ENCODE measurements at regions of chr12 and their contacts with region 1.

Region 1: DNA sequence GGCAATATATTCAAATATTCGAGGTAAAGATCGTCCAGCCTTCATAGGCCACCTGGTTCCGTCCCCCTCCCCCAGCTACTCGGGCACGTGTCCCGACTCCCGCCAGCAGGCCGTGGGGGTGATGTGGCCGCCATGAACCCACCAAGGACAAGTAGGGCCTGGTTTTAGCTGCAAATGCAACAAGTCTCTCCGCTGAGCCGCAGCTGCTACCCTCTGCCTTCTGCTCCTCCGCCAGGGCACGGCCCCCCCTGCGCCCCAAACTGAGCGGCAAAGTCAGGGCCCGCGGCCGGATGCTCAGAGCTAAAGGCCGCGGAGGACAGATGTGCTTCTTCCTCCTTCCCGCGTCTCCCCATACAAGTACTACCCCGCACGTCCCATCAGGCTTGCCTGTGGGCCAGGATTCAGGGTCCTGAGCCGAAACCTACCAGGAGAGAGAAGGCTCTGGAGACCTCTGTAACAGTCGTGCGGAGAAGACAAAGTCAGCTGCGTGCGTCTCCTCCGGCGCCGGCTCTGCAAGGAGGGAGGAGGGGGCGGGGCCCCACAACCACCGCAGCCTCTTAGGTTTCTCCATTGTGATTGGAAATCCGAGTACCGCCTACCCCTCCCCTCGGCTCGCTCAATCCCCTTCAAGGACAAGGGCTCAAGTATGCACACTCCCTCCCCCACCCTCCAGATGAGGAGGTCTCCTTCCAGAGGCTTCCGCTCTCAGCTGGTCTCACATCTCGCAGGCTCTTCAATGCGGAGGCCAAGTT is at the start of gene LDHB:
- DNase-seq: peak; percentile 83 to 96 (median 91)
- ATAC-seq: peak; percentile 92
- H3K4me3 ChIP-seq: peak within 1 kb of the TSS; percentile 87
- H3K4me3 Mint-ChIP-seq: peak within 1 kb of the TSS; percentile 99
- H3K27ac ChIP-seq: peak within 1 kb of the TSS; percentile 56 to 80
- H3K27ac Mint-ChIP-seq: peak within 1 kb of the TSS; percentile 91
- H3K4me1 ChIP-seq: peaks cover 16% of the 10 kb centered on the region
- H3K4me1 Mint-ChIP-seq: peaks cover 77% of the 10 kb centered on the region
- H3K27me3 ChIP-seq: no peaks in the 10 kb centered on the region
- H3K27me3 Mint-ChIP-seq: no peaks in the 10 kb centered on the region
- CTCF ChIP-seq: no peak
- total RNA-seq, gene LDHB: 559 to 605 TPM

Region 2: DNA sequence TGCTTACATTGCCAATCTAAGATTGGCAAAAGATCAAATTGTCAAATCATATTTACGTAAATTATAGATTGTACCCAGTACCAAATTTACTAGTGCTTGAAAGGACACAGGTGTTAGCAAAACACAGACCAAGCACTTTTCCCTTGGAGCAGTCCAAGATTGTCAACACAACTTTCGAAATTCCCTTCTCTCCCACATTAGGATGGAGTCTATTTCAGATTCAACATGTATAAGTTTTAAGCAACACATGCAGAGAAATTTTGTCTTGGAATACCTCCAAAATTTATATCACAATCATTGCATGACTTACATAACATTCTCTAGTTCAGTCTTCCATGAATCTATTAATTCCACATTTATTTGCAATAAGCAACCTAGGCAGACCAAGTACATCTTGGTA is 1037.2 kb before region 1 on chr12:
- CTCF ChIA-PET with region 1: no interaction called
- POLR2A ChIA-PET with region 1: no interaction called
- intact Hi-C with region 1: no loop called
- DNase-seq: no peak
- ATAC-seq: no peak
- H3K4me3 ChIP-seq: no peak overlapping the region
- H3K4me3 Mint-ChIP-seq: no peak overlapping the region
- H3K27ac ChIP-seq: no peak overlapping the region
- H3K27ac Mint-ChIP-seq: no peak overlapping the region
- H3K4me1 ChIP-seq: no peaks in the 10 kb centered on the region
- H3K4me1 Mint-ChIP-seq: no peaks in the 10 kb centered on the region
- H3K27me3 ChIP-seq: no peaks in the 10 kb centered on the region
- H3K27me3 Mint-ChIP-seq: no peaks in the 10 kb centered on the region
- CTCF ChIP-seq: no peak

Region 3: GRCh38 chr12:21438643-21439042 is 218.9 kb before region 1 on chr12:
- CTCF ChIA-PET with region 1: interaction called, 3 read pairs
- POLR2A ChIA-PET with region 1: interaction called, 14 read pairs
- intact Hi-C with region 1: no loop called
- DNase-seq: peak in 1 of 14 experiments; percentile 16
- ATAC-seq: no peak
- H3K4me3 ChIP-seq: peak overlapping the region; percentile 89
- H3K4me3 Mint-ChIP-seq: peak overlapping the region; percentile 99
- H3K27ac ChIP-seq: peak overlapping the region in 1 of 2 donors; percentile 12
- H3K27ac Mint-ChIP-seq: peak overlapping the region; percentile 97
- H3K4me1 ChIP-seq: peaks cover 19% of the 10 kb centered on the region
- H3K4me1 Mint-ChIP-seq: peaks cover 55% of the 10 kb centered on the region
- H3K27me3 ChIP-seq: no peaks in the 10 kb centered on the region
- H3K27me3 Mint-ChIP-seq: no peaks in the 10 kb centered on the region
- CTCF ChIP-seq: no peak

Region 4: DNA sequence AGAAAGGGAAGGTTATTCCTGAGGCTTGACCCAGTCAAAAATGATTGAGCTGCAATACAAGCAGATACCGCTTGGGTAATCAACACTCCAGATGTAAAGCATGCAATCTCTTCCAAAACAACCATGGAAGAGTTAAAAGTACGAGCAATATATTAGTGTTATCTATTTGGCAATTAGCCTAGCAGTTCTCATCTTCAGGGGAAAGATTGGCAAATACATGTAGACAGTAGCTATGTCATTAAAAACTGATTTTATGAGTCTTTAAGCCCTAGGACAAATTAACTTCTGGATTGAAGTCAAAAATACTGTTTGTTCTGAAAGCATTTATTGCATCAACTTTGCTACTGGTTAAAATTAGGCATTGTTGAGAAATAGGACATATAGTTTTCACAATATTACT is 43.6 kb before region 1 on chr12:
- CTCF ChIA-PET with region 1: no interaction called
- POLR2A ChIA-PET with region 1: interaction called, 33 read pairs
- intact Hi-C with region 1: loop called (anchors 2 to 5 kb)
- DNase-seq: no peak
- ATAC-seq: no peak
- H3K4me3 ChIP-seq: no peak overlapping the region
- H3K4me3 Mint-ChIP-seq: peak overlapping the region; percentile 43
- H3K27ac ChIP-seq: peak overlapping the region; percentile 58 to 61
- H3K27ac Mint-ChIP-seq: peak overlapping the region; percentile 84
- H3K4me1 ChIP-seq: peaks cover 24% of the 10 kb centered on the region
- H3K4me1 Mint-ChIP-seq: peaks cover 63% of the 10 kb centered on the region
- H3K27me3 ChIP-seq: no peaks in the 10 kb centered on the region
- H3K27me3 Mint-ChIP-seq: no peaks in the 10 kb centered on the region
- CTCF ChIP-seq: no peak

Region 5: GRCh38 chr12:21642707-21643389 is 14.7 kb before region 1 on chr12:
- CTCF ChIA-PET with region 1: interaction called, 3 read pairs
- POLR2A ChIA-PET with region 1: interaction called, 53 read pairs
- intact Hi-C with region 1: loop called in 1 of 2 experiments (anchors 2 kb)
- DNase-seq: peak in 1 of 14 experiments; percentile 25
- ATAC-seq: peak; percentile 41
- H3K4me3 ChIP-seq: no peak overlapping the region
- H3K4me3 Mint-ChIP-seq: no peak overlapping the region
- H3K27ac ChIP-seq: no peak overlapping the region
- H3K27ac Mint-ChIP-seq: peak overlapping the region; percentile 84
- H3K4me1 ChIP-seq: peaks cover 27% of the 10 kb centered on the region
- H3K4me1 Mint-ChIP-seq: peaks cover 91% of the 10 kb centered on the region
- H3K27me3 ChIP-seq: no peaks in the 10 kb centered on the region
- H3K27me3 Mint-ChIP-seq: no peaks in the 10 kb centered on the region
- CTCF ChIP-seq: no peak

Region 6: DNA sequence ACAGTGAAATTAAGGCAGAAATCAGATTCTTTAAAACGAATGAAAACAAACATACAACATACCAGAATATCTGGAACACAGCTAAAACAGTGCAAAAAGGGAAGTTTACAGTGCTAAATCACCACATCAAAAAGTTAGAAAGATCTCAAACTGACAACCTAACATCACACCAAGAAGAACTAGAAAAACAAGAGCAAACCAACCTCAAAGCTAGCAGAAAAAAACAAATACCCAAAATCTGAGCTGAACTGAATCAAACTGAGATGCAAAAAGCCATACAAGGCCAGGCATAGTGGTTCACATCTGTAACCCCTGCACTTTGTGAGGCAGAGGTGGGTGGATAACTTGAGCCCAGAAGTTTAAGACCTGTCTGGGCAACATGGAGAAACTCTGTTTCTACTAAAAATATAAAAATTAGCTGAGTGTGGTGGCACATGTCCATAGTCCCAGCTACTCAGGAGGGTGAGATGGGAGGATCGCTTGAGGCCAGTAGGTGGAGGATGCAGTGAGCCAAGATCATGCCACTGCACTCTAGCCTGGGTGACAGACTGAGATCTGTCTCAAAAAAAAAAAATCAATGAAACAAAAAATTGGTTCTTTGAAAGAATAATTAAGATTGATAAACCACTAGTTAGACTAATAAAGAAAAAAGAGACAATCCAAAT is 33.3 kb after region 1 on chr12:
- CTCF ChIA-PET with region 1: no interaction called
- POLR2A ChIA-PET with region 1: interaction called, 22 read pairs
- intact Hi-C with region 1: no loop called
- DNase-seq: peak in 3 of 14 experiments; percentile 27 to 51 (median 27)
- ATAC-seq: peak; percentile 69
- H3K4me3 ChIP-seq: no peak overlapping the region
- H3K4me3 Mint-ChIP-seq: peak overlapping the region; percentile 8
- H3K27ac ChIP-seq: peak overlapping the region in 1 of 2 donors; percentile 15
- H3K27ac Mint-ChIP-seq: peak overlapping the region; percentile 82
- H3K4me1 ChIP-seq: peaks cover 5% of the 10 kb centered on the region
- H3K4me1 Mint-ChIP-seq: peaks cover 38% of the 10 kb centered on the region
- H3K27me3 ChIP-seq: no peaks in the 10 kb centered on the region
- H3K27me3 Mint-ChIP-seq: no peaks in the 10 kb centered on the region
- CTCF ChIP-seq: no peak

Region 7: DNA sequence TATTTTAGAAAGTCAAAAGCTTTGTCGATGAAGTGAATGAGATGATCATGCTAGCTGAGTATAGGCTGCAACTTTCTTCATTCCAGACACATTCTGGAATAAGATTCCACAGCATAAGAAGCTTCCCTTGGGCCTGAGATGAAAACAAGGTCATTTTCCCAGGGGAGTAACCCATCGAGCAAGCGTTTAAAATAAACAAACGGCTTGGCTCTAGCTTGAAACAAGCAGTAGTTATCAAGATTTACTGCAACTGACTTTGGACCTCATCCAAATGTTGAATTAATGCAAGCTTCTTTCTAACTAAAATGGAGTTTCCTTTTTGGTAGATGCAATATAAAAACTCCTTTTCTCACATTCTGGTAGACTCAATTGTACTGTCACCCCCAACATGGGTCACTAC is 94.0 kb after region 1 on chr12:
- CTCF ChIA-PET with region 1: no interaction called
- POLR2A ChIA-PET with region 1: no interaction called
- intact Hi-C with region 1: no loop called
- DNase-seq: no peak
- ATAC-seq: no peak
- H3K4me3 ChIP-seq: no peak overlapping the region
- H3K4me3 Mint-ChIP-seq: no peak overlapping the region
- H3K27ac ChIP-seq: no peak overlapping the region
- H3K27ac Mint-ChIP-seq: no peak overlapping the region
- H3K4me1 ChIP-seq: no peaks in the 10 kb centered on the region
- H3K4me1 Mint-ChIP-seq: no peaks in the 10 kb centered on the region
- H3K27me3 ChIP-seq: peaks cover 0 to 4% of the 10 kb centered on the region in 2 experiments
- H3K27me3 Mint-ChIP-seq: peaks cover 31% of the 10 kb centered on the region
- CTCF ChIP-seq: no peak

Measured in CD4-positive, alpha-beta T cell (primary cell).